ENCODE measurements at regions of chr6 and their contacts with region 1.

Region 1: GRCh38 chr6:154510143-154510905 is at the start of gene CNKSR3:
- DNase-seq: peak; percentile 90 to 94
- ATAC-seq: peak; percentile 91
- H3K4me3 ChIP-seq: peak within 1 kb of the TSS; percentile 81 to 83
- H3K27ac ChIP-seq: peak within 1 kb of the TSS; percentile 24 to 92
- H3K4me1 ChIP-seq: peaks cover 0 to 3% of the 10 kb centered on the region in 2 donors
- H3K27me3 ChIP-seq: no peaks in the 10 kb centered on the region
- total RNA-seq, gene CNKSR3: 19.3 to 41.2 TPM

Region 2: GRCh38 chr6:154030646-154031045 is 479.7 kb before region 1 on chr6:
- intact Hi-C with region 1: no loop called
- DNase-seq: no peak
- ATAC-seq: no peak
- H3K4me3 ChIP-seq: no peak overlapping the region
- H3K27ac ChIP-seq: no peak overlapping the region
- H3K4me1 ChIP-seq: no peaks in the 10 kb centered on the region
- H3K27me3 ChIP-seq: no peaks in the 10 kb centered on the region

Region 3: DNA sequence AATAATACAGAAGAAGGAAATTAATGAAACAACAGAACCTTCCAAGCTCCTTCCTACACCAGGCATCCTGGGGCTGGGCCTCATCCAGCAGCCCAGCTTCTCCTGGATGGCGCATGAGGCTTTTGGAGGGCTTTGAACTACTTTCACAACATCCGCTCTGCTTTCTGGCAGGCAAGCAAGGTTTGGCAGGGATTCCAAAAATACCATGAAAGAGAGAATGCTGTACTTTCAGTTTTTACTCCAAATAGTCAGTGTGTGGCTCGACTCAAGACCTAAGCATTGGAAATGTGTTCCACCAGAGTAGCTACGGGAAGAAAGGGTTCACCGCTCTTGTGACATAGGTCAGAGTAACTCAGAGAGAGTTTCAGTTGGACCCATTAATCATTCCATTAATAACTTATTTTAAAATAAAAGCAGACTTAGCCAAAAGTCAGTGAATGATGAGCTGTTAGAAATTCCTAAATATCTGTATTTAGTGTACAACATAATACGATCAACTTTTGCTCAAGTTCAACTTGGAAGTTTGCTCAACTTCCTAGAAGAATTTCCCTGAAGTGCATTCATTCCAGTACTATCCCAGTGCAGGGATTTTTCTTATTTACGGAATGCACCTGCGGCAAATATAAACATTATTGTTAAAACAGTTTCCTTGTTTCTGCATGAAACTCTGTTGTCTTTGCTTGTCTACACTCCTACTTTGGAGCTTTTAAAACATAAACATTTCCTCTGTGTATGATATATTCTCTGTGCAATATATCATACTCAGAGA is 345.7 kb before region 1 on chr6:
- intact Hi-C with region 1: loop called in 1 of 2 experiments (anchors 10 kb)
- DNase-seq: peak in 1 of 2 donors; percentile 82
- ATAC-seq: peak; percentile 79
- H3K4me3 ChIP-seq: no peak overlapping the region
- H3K27ac ChIP-seq: peak overlapping the region in 1 of 2 donors; percentile 6
- H3K4me1 ChIP-seq: no peaks in the 10 kb centered on the region
- H3K27me3 ChIP-seq: no peaks in the 10 kb centered on the region

Region 4: DNA sequence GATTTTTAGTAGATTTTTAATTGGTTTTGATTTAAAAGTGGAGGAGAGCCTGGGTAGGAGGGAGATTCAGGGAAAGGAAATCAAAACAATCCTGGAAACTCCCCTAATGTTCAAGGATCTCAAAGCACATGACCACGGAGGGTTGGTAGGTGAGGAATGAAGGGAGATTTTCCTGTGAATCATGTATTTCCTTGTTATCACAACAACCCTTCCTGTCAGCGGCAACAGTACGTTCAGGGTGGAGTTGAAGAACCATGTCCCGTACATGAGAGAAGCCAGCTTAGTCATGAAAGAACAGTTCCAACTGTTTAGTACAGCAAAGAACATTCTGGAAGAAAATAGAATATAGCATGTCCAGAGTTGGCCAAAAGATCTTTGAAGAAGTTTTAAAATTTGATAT is 143.5 kb after region 1 on chr6:
- intact Hi-C with region 1: loop called (anchors 5 to 10 kb)
- DNase-seq: no peak
- ATAC-seq: peak; percentile 48
- H3K4me3 ChIP-seq: no peak overlapping the region
- H3K27ac ChIP-seq: peak overlapping the region in 1 of 2 donors; percentile 33
- H3K4me1 ChIP-seq: peaks cover 0 to 4% of the 10 kb centered on the region in 2 donors
- H3K27me3 ChIP-seq: no peaks in the 10 kb centered on the region